Dendritic cell treated with granulocyte-macrophage colony-stimulating factor and Interleukin-4, amounts not matched to agents 40 ng/mL and 50 ng/mL, for 4 days (primary cell): ENCODE measurements at regions of chr15 and their contacts with region 1.

Region 1: DNA sequence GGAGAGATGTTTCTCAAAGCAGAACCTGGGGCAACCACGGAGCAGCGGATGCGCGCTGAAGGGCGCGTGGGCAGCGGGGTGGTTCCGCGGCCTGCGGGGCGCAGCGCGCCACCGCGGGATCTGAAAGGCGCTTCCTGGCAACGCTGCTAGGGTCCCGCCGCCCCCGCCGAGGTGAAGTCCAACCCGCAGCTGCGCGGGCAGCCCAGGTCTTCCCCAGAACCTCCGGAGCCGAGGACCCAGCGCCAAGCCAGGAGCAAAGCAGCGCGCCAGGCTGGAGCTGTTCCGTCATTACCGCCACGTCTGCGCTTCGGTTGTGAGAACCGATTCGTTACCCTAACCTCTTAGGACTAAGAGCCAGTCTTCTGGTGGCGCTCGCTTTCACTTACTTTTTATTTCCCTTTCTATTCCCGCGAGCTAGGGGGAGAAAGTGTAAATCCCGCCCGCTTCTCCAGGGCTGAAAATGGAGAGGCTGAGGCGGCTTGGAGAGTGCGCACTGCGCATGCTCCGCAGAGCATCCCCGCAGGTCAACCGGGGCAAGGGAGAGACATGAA is 3.2 kb upstream of the GABRG3 start:
- H3K4me3 Mint-ChIP-seq: no peak overlapping the region
- H3K27ac Mint-ChIP-seq: no peak overlapping the region
- H3K4me1 Mint-ChIP-seq: no peaks in the 10 kb centered on the region
- H3K27me3 Mint-ChIP-seq: peaks cover 37% of the 10 kb centered on the region

Region 2: DNA sequence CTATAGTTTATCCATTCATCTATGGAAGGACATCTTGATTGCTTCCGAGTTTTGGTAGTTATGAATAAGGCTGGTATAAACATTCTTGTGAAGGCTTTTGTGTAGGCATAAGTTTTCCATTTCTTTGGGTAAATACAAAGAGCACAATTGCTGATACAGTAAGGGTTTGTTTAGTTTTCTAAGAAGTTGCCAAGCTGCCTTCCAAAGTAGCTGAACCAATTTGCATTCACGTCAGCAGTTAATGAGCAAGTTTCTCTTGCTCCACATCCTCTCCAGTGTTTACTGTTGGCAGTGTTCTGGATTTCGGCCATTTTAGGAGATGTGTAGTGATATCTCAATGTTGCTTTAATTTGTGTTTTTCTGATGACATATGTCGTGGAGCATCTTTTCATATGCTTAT is 66.8 kb before region 1 on chr15:
- intact Hi-C with region 1: loop called (anchors 10 kb)
- H3K4me3 Mint-ChIP-seq: no peak overlapping the region
- H3K27ac Mint-ChIP-seq: no peak overlapping the region
- H3K4me1 Mint-ChIP-seq: no peaks in the 10 kb centered on the region
- H3K27me3 Mint-ChIP-seq: no peaks in the 10 kb centered on the region

Region 3: GRCh38 chr15:27111323-27111722 is 143.5 kb after region 1 on chr15:
- intact Hi-C with region 1: no loop called
- H3K4me3 Mint-ChIP-seq: no peak overlapping the region
- H3K27ac Mint-ChIP-seq: no peak overlapping the region
- H3K4me1 Mint-ChIP-seq: no peaks in the 10 kb centered on the region
- H3K27me3 Mint-ChIP-seq: no peaks in the 10 kb centered on the region